ENCODE measurements at regions of chr16 and their contacts with region 1.

Region 1: GRCh38 chr16:57045694-57046381 is 46.5 kb upstream of the CPNE2 start:
- DNase-seq: peak; percentile 71 to 82 (median 79)
- H3K4me3 ChIP-seq: no peak overlapping the region
- H3K27ac ChIP-seq: no peak overlapping the region
- H3K4me1 ChIP-seq: peaks cover 3% of the 10 kb centered on the region
- H3K27me3 ChIP-seq: no peaks in the 10 kb centered on the region
- CTCF ChIP-seq: peak; percentile 48 to 58 (median 51)
- EP300 ChIP-seq: no peak
- POLR2A ChIP-seq: no peak

Region 2: DNA sequence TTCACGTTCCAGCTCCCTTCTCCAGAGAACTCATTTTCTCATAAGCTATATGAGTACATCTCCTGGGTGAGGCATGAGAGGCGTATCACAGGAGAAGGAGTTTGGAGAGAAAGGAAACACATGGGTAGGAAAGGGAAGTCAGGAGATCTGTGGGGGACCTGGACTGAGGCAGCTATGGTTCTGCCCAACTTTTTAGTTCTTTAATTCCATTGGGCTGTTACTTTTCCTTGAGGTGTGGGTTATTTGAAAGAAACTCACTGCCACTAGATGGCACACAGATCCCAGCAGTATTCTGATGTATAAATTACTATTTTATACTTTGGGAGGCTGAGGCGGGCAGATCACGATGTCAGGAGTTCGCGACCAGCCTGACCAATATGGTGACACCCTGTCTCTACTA is 252.3 kb before region 1 on chr16:
- intact Hi-C with region 1: loop called in 1 of 4 experiments (anchors 2 kb)
- DNase-seq: no peak
- H3K4me3 ChIP-seq: no peak overlapping the region
- H3K27ac ChIP-seq: no peak overlapping the region
- H3K4me1 ChIP-seq: peaks cover 3% of the 10 kb centered on the region
- H3K27me3 ChIP-seq: no peaks in the 10 kb centered on the region
- CTCF ChIP-seq: peak in 1 of 3 donors; percentile 23
- EP300 ChIP-seq: no peak
- POLR2A ChIP-seq: no peak

Measured in ovary (tissue), 10 donors.